ENCODE measurements at regions of chr1 and their contacts with region 1.

Region 1: GRCh38 chr1:77683160-77684148 is 996 bp upstream of the ZZZ3 start:
- DNase-seq: peak; percentile 93
- H3K4me3 ChIP-seq: peak overlapping the region; percentile 49 to 74 (median 63)
- H3K27ac ChIP-seq: peak overlapping the region; percentile 58
- H3K4me1 ChIP-seq: peaks cover 21% of the 10 kb centered on the region
- H3K27me3 ChIP-seq: no peaks in the 10 kb centered on the region
- CTCF ChIP-seq: peak; percentile 55 to 80

Region 2: GRCh38 chr1:77143529-77144121 is 539.8 kb before region 1 on chr1:
- CTCF ChIA-PET with region 1: no interaction called
- dilution Hi-C with region 1: no loop called
- in situ Hi-C with region 1: no loop called
- intact Hi-C with region 1: loop called (anchors 1 kb)
- DNase-seq: no peak
- H3K4me3 ChIP-seq: no peak overlapping the region
- H3K27ac ChIP-seq: no peak overlapping the region
- H3K4me1 ChIP-seq: no peaks in the 10 kb centered on the region
- H3K27me3 ChIP-seq: no peaks in the 10 kb centered on the region
- CTCF ChIP-seq: peak; percentile 27 to 40

Region 3: GRCh38 chr1:77313491-77313890 is 370.0 kb before region 1 on chr1:
- CTCF ChIA-PET with region 1: no interaction called
- dilution Hi-C with region 1: no loop called
- in situ Hi-C with region 1: no loop called
- intact Hi-C with region 1: loop called (anchors 10 kb)
- DNase-seq: no peak
- H3K4me3 ChIP-seq: no peak overlapping the region
- H3K27ac ChIP-seq: no peak overlapping the region
- H3K4me1 ChIP-seq: peaks cover 5% of the 10 kb centered on the region
- H3K27me3 ChIP-seq: no peaks in the 10 kb centered on the region
- CTCF ChIP-seq: peak; percentile 20 to 35

Region 4: GRCh38 chr1:77538956-77539518 is 144.4 kb before region 1 on chr1:
- CTCF ChIA-PET with region 1: no interaction called
- dilution Hi-C with region 1: no loop called
- in situ Hi-C with region 1: no loop called
- intact Hi-C with region 1: loop called (anchors 1 kb)
- DNase-seq: peak; percentile 71
- H3K4me3 ChIP-seq: no peak overlapping the region
- H3K27ac ChIP-seq: peak overlapping the region; percentile 55
- H3K4me1 ChIP-seq: peaks cover 41% of the 10 kb centered on the region
- H3K27me3 ChIP-seq: no peaks in the 10 kb centered on the region
- CTCF ChIP-seq: no peak

Region 5: GRCh38 chr1:77888081-77888780 is 204.8 kb after region 1 on chr1 and contains the start of gene NEXN:
- CTCF ChIA-PET with region 1: no interaction called
- dilution Hi-C with region 1: no loop called
- in situ Hi-C with region 1: no loop called
- intact Hi-C with region 1: loop called (anchors 5 kb)
- DNase-seq: peak; percentile 52
- H3K4me3 ChIP-seq: peak within 1 kb of the TSS; percentile 81 to 88 (median 84)
- H3K27ac ChIP-seq: peak within 1 kb of the TSS; percentile 86
- H3K4me1 ChIP-seq: peaks cover 9% of the 10 kb centered on the region
- H3K27me3 ChIP-seq: no peaks in the 10 kb centered on the region
- CTCF ChIP-seq: peak in 1 of 2 donors; percentile 2
- total RNA-seq, gene NEXN: 6.3 to 8.2 TPM

Region 6: GRCh38 chr1:77926561-77927357 is 243.3 kb after region 1 on chr1:
- CTCF ChIA-PET with region 1: no interaction called
- dilution Hi-C with region 1: no loop called
- in situ Hi-C with region 1: no loop called
- intact Hi-C with region 1: no loop called
- DNase-seq: no peak
- H3K4me3 ChIP-seq: no peak overlapping the region
- H3K27ac ChIP-seq: no peak overlapping the region
- H3K4me1 ChIP-seq: no peaks in the 10 kb centered on the region
- H3K27me3 ChIP-seq: no peaks in the 10 kb centered on the region
- CTCF ChIP-seq: no peak

Measured in mammary epithelial cell (primary cell).